ENCODE measurements at regions of chr16 and their contacts with region 1.

Region 1: GRCh38 chr16:28950648-28951409 is at the start of gene NFATC2IP:
- DNase-seq: peak; percentile 100
- H3K4me3 Mint-ChIP-seq: peak within 1 kb of the TSS; percentile 92
- H3K27ac Mint-ChIP-seq: peak within 1 kb of the TSS; percentile 91
- H3K4me1 Mint-ChIP-seq: peaks cover 18% of the 10 kb centered on the region
- H3K27me3 Mint-ChIP-seq: no peaks in the 10 kb centered on the region
- total RNA-seq, gene NFATC2IP: 98.3 and 106 TPM in 2 replicates

Region 2: GRCh38 chr16:28924732-28925385 is 26.0 kb before region 1 on chr16 and contains the start of gene RABEP2:
- intact Hi-C with region 1: loop called (anchors 2 kb)
- DNase-seq: peak; percentile 93
- H3K4me3 Mint-ChIP-seq: peak within 1 kb of the TSS; percentile 95
- H3K27ac Mint-ChIP-seq: peak within 1 kb of the TSS; percentile 99
- H3K4me1 Mint-ChIP-seq: peaks cover 11% of the 10 kb centered on the region
- H3K27me3 Mint-ChIP-seq: no peaks in the 10 kb centered on the region
- total RNA-seq, gene RABEP2: 20.6 and 24.2 TPM in 2 replicates

Region 3: DNA sequence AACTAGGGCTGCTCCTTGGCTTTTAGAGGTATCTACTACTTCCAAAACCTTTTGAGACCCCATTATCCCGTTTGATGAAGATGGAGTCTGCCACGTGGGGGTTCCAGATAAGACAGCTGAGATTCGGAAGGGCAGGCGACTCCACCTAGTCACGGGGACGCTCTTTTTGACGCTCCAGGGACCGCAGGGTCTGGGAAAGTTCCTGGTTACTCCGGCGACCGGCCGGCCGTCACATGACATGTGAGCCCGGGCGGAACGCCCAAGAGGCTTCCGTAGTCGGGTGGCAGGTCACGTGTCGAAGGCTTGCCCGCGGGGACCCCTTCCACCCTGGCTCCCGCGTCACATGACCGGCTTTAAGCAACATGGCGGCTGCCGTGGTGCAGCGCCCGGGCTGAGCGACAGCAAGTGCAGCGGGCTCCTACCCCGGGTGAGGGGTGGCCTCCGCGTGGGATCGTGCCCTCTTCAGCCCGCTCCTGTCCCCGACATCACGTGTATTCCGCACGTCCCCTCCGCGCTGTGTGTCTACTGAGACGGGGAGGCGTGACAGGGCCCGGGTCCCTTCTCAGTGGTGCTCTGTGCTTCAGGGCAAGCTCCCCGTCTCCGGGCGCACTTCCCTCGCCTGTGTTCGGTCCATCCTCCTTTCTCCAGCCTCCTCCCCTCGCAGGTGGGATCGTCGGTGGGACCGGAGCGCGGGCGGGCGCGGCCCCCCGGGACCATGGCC is 23.8 kb after region 1 on chr16 and contains the start of gene SPNS1:
- intact Hi-C with region 1: loop called (anchors 2 kb)
- DNase-seq: peak; percentile 92
- H3K4me3 Mint-ChIP-seq: peak within 1 kb of the TSS; percentile 97
- H3K27ac Mint-ChIP-seq: peak within 1 kb of the TSS; percentile 95
- H3K4me1 Mint-ChIP-seq: peaks cover 18% of the 10 kb centered on the region
- H3K27me3 Mint-ChIP-seq: no peaks in the 10 kb centered on the region
- total RNA-seq, gene SPNS1: 22.0 and 25.8 TPM in 2 replicates

Measured in activated T-helper 2 cell treated with anti-CD3 and anti-CD28 coated beads, Interferon-gamma antibody, Interleukin-2, Interleukin-4, amounts not matched to agents 10 μg/mL and 5 μg/mL and 100 μg/mL, durations not matched to agents 14 hours and 24 hours and 36 hours (primary cell).